ENCODE measurements at regions of chr2 and their contacts with region 1.

Region 1: DNA sequence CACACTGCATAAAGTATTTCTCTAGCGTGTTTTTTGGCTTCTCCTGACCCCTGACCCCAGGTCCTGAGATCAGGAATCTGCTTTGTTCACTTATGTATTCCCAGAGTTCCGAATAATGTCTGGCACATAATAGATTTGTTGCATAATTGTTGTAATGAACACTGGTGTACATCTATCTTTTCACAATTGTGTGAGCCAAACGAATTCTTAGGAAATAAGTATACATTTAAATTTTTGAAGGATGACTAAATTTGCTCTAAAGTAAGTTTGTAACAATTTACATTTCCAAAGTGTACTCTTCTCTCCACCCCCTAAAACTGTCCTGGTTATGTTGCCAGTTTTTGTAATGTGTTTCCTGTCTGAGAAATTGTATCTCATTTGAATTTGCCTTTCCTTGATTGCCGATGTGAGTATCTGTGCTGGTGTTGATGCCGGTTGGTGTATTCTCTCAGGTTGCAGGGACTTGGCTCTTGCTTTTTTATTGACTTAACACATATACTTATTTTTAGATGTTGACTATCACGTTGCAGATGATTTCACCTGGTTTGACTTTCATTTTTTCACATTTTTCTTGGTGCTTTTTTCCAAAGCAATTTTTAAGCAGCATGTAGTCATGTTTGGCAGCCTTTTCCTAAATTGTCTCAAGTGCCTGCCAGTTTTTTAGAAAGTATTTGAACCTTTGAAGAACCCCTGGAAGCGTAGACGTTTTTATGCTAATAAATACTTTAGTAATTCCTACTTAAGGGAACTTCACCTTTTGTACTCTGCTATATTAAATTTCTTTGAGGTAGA is 16.1 kb upstream of the FARP2 start:
- DNase-seq: no peak
- H3K4me3 ChIP-seq: no peak overlapping the region
- H3K27ac ChIP-seq: no peak overlapping the region
- H3K4me1 ChIP-seq: no peaks in the 10 kb centered on the region
- H3K27me3 ChIP-seq: no peaks in the 10 kb centered on the region
- CTCF ChIP-seq: no peak

Region 2: GRCh38 chr2:241257417-241258032 is 82.5 kb before region 1 on chr2:
- CTCF ChIA-PET with region 1: no interaction called
- POLR2A ChIA-PET with region 1: no interaction called
- intact Hi-C with region 1: loop called (anchors 10 kb)
- DNase-seq: no peak
- H3K4me3 ChIP-seq: no peak overlapping the region
- H3K27ac ChIP-seq: no peak overlapping the region
- H3K4me1 ChIP-seq: no peaks in the 10 kb centered on the region
- H3K27me3 ChIP-seq: no peaks in the 10 kb centered on the region
- CTCF ChIP-seq: no peak

Region 3: DNA sequence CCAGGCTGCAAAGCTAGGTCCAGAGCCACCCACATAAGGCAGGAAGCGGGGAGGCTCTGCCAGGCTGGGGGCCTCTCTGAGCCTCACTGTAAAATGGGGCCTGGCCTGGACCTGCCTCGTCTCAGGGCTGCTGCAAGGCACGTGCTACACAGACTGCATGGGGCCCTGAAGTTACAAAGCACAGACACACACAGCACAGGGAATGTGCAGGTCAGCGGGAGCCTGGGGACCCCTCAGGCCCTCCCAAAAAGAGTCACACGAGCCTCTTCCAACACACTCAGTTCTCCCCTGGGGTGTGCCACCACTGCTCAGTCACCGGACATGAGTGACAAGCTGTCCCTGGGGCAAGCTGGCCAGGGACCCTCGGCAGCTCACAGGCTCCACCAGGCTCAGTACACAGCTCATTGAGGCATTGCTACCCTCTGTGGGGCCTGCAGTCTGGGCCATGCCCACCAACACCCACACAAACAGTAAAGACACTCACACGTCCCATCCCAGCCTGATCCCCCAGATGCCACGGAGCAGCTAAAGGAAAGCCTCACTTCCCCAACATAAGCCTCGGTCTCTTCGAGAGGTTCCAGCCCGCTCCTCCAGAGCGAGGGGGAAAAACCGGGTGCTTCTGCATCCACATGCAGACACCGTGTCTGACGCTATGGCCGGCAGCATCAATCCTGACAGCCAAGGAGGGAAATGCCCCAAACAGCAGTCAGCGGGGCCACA is 252.3 kb after region 1 on chr2:
- CTCF ChIA-PET with region 1: no interaction called
- POLR2A ChIA-PET with region 1: no interaction called
- intact Hi-C with region 1: no loop called
- DNase-seq: no peak
- H3K4me3 ChIP-seq: no peak overlapping the region
- H3K27ac ChIP-seq: no peak overlapping the region
- H3K4me1 ChIP-seq: no peaks in the 10 kb centered on the region
- H3K27me3 ChIP-seq: no peaks in the 10 kb centered on the region
- CTCF ChIP-seq: no peak